Colonic mucosa (tissue), 4 donors: ENCODE measurements at regions of chr2 and their contacts with region 1.

Region 1: DNA sequence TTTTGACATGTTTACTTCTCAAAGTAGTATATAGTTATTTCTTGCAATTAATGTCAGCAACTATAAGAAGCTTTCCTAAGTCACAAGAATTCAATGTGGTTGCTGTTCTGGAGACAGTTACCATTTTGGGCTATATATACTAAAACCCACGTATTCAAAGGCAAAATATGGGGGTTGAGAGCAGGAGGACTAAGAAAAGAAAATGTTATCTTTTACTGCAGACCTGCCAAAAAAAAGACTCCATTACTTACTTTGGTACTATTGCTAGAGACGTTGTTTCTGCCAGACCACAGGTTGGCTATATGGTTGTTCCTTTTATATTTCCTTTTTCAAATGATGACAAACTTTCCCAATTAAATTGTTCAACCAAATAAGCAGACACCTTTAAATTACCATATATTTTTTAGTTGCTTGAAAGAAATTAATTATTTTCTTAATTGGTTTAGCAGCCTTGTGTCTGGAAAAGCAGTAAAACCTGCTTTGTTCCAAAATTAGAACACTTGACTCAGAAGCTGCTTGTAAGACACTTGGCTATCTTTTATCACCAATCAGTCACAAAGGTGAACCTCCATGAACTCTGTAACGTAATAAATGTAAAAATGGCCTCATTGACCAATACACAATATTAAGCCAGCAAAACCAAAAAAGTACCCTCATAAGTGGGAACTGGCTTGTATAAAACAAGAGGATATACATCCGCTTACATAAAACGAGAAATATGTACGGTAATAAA is 8.2 kb upstream of the OSGEPL1 start:
- DNase-seq: no peak
- H3K4me3 ChIP-seq: no peak overlapping the region
- H3K27ac ChIP-seq: no peak overlapping the region
- H3K4me1 ChIP-seq: no peaks in the 10 kb centered on the region
- H3K27me3 ChIP-seq: no peaks in the 10 kb centered on the region
- CTCF ChIP-seq: no peak

Region 2: GRCh38 chr2:189454009-189454408 is 316.7 kb before region 1 on chr2:
- intact Hi-C with region 1: loop called (anchors 10 kb)
- DNase-seq: no peak
- H3K4me3 ChIP-seq: no peak overlapping the region
- H3K27ac ChIP-seq: no peak overlapping the region
- H3K4me1 ChIP-seq: no peaks in the 10 kb centered on the region
- H3K27me3 ChIP-seq: no peaks in the 10 kb centered on the region
- CTCF ChIP-seq: no peak